ENCODE measurements at regions of chr5 and their contacts with region 1.

Region 1: DNA sequence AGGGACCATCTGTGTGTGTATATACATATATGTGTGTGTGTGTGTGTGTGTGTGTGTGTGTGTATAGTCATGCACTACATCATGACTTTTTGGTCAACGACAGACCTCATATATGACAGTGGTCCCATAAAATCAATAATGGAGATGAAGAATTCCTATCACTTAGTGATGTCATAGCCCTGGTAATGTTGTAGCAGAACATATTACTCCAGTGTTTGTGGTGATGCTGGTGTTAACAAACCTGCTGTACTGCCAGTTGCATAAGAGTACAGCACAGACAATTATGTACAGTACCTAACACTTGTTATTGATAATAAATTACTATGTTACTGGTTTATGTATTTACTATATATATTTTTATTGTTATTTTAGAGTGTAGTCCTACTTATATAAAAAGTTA is 1787.0 kb downstream of the EFNA5 start:
- DNase-seq: no peak
- ATAC-seq: no peak
- H3K4me3 ChIP-seq: no peak overlapping the region
- H3K27ac ChIP-seq: no peak overlapping the region
- H3K4me1 ChIP-seq: no peaks in the 10 kb centered on the region
- H3K27me3 ChIP-seq: no peaks in the 10 kb centered on the region
- CTCF ChIP-seq: no peak
- POLR2A ChIP-seq: no peak
- RAD21 ChIP-seq: no peak

Region 2: GRCh38 chr5:106241432-106241831 is 357.7 kb after region 1 on chr5:
- CTCF ChIA-PET with region 1: no interaction called
- POLR2A ChIA-PET with region 1: no interaction called
- dilution Hi-C with region 1: no loop called
- in situ Hi-C with region 1: no loop called
- intact Hi-C with region 1: loop called (anchors 10 kb)
- DNase-seq: no peak
- ATAC-seq: no peak
- H3K4me3 ChIP-seq: no peak overlapping the region
- H3K27ac ChIP-seq: no peak overlapping the region
- H3K4me1 ChIP-seq: no peaks in the 10 kb centered on the region
- H3K27me3 ChIP-seq: no peaks in the 10 kb centered on the region
- CTCF ChIP-seq: no peak
- POLR2A ChIP-seq: no peak
- RAD21 ChIP-seq: no peak

Measured in IMR-90 (cell line).